Activated CD4-positive, alpha-beta memory T cell treated with anti-CD3 and anti-CD28 coated beads for 36 hours (primary cell): ENCODE measurements at regions of chr4 and their contacts with region 1.

Region 1: DNA sequence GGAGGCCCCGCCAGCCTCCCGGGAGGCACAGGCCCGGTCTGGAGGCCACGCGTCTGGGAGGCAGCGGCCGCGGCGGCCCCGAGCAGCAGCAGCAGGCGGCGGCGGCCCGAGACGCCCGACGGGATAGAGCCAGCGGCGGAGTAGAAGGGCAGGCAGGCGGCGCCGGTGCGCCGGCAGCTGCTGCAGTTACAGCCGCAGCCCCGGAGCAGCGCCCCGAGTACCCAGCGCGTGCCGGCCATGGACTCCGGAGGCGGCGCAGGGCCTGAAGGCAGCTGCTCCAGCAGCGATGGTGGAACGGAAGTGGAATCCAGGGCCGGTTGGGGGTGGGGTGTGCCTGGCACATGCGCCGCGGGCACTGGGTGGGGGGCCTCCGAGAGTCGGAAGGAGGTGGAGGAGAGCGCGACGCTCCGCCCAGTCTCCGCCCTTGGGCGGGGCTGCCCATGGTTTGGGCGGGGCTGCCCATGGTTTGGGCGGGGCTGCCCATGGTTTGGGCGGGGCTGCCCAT is at the start of gene GRSF1:
- DNase-seq: peak; percentile 97
- H3K4me3 Mint-ChIP-seq: peak within 1 kb of the TSS; percentile 98
- H3K27ac Mint-ChIP-seq: peak within 1 kb of the TSS; percentile 99
- H3K4me1 Mint-ChIP-seq: peaks cover 31% of the 10 kb centered on the region
- H3K27me3 Mint-ChIP-seq: no peaks in the 10 kb centered on the region
- total RNA-seq, gene GRSF1: 97.8 to 97.9 TPM

Region 2: DNA sequence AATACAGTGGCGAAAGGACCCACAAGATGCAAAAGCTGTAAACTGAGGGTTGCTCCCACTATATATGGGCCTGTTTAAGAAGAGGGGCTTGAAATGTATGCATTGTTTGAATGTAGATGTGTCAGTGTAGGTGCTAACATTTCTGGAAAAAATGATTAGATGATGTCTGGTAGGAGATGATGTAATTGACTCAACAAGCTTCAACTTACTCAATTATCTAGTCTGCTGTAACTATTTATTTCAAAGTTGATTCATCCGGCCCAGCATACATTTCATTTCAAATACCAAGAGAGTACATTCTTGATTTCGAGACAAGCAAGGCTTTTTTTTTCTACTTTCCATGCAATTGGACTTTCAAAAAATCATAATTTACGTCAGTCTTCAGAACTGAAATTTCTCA is 220.4 kb before region 1 on chr4:
- CTCF ChIA-PET with region 1: no interaction called
- POLR2A ChIA-PET with region 1: no interaction called
- intact Hi-C with region 1: loop called (anchors 5 kb)
- DNase-seq: no peak
- H3K4me3 Mint-ChIP-seq: no peak overlapping the region
- H3K27ac Mint-ChIP-seq: no peak overlapping the region
- H3K4me1 Mint-ChIP-seq: peaks cover 2% of the 10 kb centered on the region
- H3K27me3 Mint-ChIP-seq: peaks cover under 1% of the 10 kb centered on the region

Region 3: GRCh38 chr4:70629469-70630090 is 210.1 kb before region 1 on chr4:
- CTCF ChIA-PET with region 1: no interaction called
- POLR2A ChIA-PET with region 1: no interaction called
- intact Hi-C with region 1: no loop called
- DNase-seq: no peak
- H3K4me3 Mint-ChIP-seq: no peak overlapping the region
- H3K27ac Mint-ChIP-seq: no peak overlapping the region
- H3K4me1 Mint-ChIP-seq: peaks cover 6% of the 10 kb centered on the region
- H3K27me3 Mint-ChIP-seq: peaks cover 9% of the 10 kb centered on the region

Region 4: DNA sequence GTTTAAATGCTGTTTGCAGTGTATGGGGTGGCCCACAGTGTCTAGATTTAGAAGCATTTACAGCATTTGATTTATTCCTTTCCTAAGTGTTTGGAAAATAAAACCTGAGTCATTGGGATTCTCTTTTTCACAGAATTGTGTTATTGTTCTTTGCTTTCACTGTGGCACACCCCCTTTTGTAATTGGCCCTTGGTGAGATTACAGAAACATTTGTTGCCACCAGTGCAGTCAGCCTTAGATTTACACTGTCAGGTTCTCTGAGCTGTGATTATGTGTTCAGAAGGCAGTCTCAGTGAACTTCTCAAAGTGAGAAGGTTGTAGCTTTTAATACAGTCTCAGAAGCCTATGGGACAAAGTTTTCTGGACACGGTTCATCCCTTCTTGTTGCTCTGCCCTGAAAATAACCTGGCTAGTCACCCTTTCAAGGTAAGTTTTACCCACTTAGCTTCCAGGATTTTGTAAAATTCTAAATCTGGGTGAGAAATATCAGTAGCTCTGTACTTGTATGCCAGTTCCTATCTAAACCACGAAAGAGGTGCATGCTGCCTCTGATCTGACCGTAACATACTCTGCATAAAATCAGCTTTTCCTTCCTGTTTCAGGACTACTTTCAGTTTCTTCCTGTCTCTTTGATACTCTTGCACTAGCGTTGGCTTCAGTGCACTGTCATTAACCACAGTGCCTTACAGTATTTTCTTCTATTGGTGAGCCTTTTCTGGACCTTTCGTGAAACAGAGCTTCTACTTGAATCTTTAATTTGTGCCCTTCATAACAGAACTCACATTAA is 105.3 kb before region 1 on chr4:
- CTCF ChIA-PET with region 1: interaction called, 7 read pairs
- POLR2A ChIA-PET with region 1: interaction called, 6 read pairs
- intact Hi-C with region 1: loop called (anchors 2 kb)
- DNase-seq: peak; percentile 40
- H3K4me3 Mint-ChIP-seq: peak overlapping the region; percentile 60
- H3K27ac Mint-ChIP-seq: peak overlapping the region; percentile 72
- H3K4me1 Mint-ChIP-seq: peaks cover 32% of the 10 kb centered on the region
- H3K27me3 Mint-ChIP-seq: no peaks in the 10 kb centered on the region

Region 5: GRCh38 chr4:70901984-70902576 is 62.4 kb after region 1 on chr4 and contains the start of gene MOB1B:
- CTCF ChIA-PET with region 1: interaction called, 14 read pairs
- POLR2A ChIA-PET with region 1: interaction called, 21 read pairs
- intact Hi-C with region 1: loop called (anchors 1 kb)
- DNase-seq: peak; percentile 92
- H3K4me3 Mint-ChIP-seq: peak within 1 kb of the TSS; percentile 88
- H3K27ac Mint-ChIP-seq: peak within 1 kb of the TSS; percentile 73
- H3K4me1 Mint-ChIP-seq: peaks cover 20% of the 10 kb centered on the region
- H3K27me3 Mint-ChIP-seq: no peaks in the 10 kb centered on the region
- total RNA-seq, gene MOB1B: 18.6 to 19.9 TPM

Region 6: GRCh38 chr4:70993181-70994068 is 153.8 kb after region 1 on chr4 and contains the start of gene DCK:
- CTCF ChIA-PET with region 1: interaction called, 7 read pairs
- POLR2A ChIA-PET with region 1: interaction called, 12 read pairs
- intact Hi-C with region 1: loop called (anchors 1 kb)
- DNase-seq: peak; percentile 91
- H3K4me3 Mint-ChIP-seq: peak within 1 kb of the TSS; percentile 91
- H3K27ac Mint-ChIP-seq: peak within 1 kb of the TSS; percentile 83
- H3K4me1 Mint-ChIP-seq: peaks cover 35% of the 10 kb centered on the region
- H3K27me3 Mint-ChIP-seq: no peaks in the 10 kb centered on the region
- total RNA-seq, gene DCK: 37.0 to 37.2 TPM